GM12878 (cell line): ENCODE measurements at regions of chr5 and their contacts with region 1.

Region 1: DNA sequence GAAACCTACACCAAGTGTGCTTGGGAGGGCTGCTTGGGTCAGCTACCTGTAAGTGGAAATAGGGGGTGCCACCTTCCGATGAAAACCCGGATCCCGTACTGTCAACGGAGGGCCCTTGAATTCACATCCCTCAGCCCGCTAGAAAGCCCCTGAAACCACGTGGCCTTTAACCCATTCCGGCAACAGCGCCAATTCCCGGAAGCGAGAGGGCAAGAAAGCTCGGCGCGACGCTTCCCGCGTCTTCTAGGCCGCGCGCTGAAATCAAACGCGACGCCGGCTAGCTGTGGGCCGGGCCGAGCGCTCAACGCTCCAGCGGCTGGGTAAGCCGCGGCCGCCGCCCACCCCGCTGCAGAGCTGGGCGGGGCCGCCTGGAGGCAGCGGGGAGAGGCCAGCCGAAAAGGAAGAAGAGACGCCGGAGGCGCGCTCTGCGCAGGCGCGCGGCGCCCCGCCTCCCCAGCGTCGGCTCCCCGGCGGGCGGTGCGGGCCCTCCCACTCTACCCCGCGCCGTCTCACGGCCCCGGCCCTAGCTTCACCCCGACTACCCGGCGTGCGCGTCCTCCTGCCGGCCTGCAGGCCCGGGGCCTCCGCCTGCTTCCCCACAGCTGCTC is at the start of gene KIF2A:
- DNase-seq: peak; percentile 78
- ATAC-seq: peak; percentile 92
- H3K4me3 ChIP-seq: peak within 1 kb of the TSS; percentile 93
- H3K27ac ChIP-seq: peak within 1 kb of the TSS; percentile 67
- H3K4me1 ChIP-seq: peaks cover 9% of the 10 kb centered on the region
- H3K27me3 ChIP-seq: no peaks in the 10 kb centered on the region
- CTCF ChIP-seq: 0 out of 6 replicates have a peak, but pooled peaks of 1 of the 3 experiments have one; percentile 10
- EP300 ChIP-seq: no peak
- POLR2A ChIP-seq: peak; percentile 91
- RAD21 ChIP-seq: no peak
- polyA plus RNA-seq, gene KIF2A: 35.9 to 36.9 TPM

Region 2: DNA sequence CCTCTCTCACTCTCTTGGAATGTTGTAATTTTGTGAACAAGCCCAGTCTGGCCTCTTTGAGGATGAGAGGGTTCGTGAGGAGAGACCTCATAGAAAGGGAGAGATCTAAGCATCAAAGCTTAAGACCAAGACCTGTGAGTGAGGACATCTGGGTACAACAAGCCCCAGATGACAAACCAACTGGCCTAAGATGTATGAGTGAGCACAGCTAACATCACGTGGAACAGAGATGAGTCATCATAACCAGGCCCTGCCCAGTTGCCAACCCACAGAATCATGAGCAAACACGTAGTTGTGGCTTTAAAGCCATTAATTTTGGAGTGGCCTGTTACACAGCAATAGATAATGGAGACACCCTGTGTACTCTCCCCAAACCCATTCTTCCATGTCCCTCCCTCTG is 438.9 kb before region 1 on chr5:
- CTCF ChIA-PET with region 1: no interaction called
- POLR2A ChIA-PET with region 1: no interaction called
- RAD21 ChIA-PET with region 1: no interaction called
- SMC1A ChIA-PET with region 1: no interaction called
- in situ Hi-C with region 1: no loop called
- intact Hi-C with region 1: no loop called
- DNase-seq: peak; percentile 32
- ATAC-seq: peak; percentile 93
- H3K4me3 ChIP-seq: no peak overlapping the region
- H3K27ac ChIP-seq: no peak overlapping the region
- H3K4me1 ChIP-seq: no peaks in the 10 kb centered on the region
- H3K27me3 ChIP-seq: no peaks in the 10 kb centered on the region
- CTCF ChIP-seq: no peak
- EP300 ChIP-seq: no peak
- POLR2A ChIP-seq: no peak
- RAD21 ChIP-seq: no peak

Region 3: GRCh38 chr5:62268234-62268633 is 37.6 kb before region 1 on chr5:
- CTCF ChIA-PET with region 1: interaction called, 4 read pairs
- POLR2A ChIA-PET with region 1: interaction called, 4 read pairs
- RAD21 ChIA-PET with region 1: interaction called, 5 read pairs
- SMC1A ChIA-PET with region 1: interaction called, 5 read pairs
- in situ Hi-C with region 1: no loop called
- intact Hi-C with region 1: loop called (anchors 5 kb)
- DNase-seq: peak; percentile 26
- ATAC-seq: peak; percentile 69
- H3K4me3 ChIP-seq: no peak overlapping the region
- H3K27ac ChIP-seq: no peak overlapping the region
- H3K4me1 ChIP-seq: no peaks in the 10 kb centered on the region
- H3K27me3 ChIP-seq: no peaks in the 10 kb centered on the region
- CTCF ChIP-seq: no peak
- EP300 ChIP-seq: no peak
- POLR2A ChIP-seq: no peak
- RAD21 ChIP-seq: no peak

Region 4: GRCh38 chr5:62326302-62326701 is 20.5 kb after region 1 on chr5:
- CTCF ChIA-PET with region 1: interaction called, 10 read pairs
- POLR2A ChIA-PET with region 1: interaction called, 4 read pairs
- RAD21 ChIA-PET with region 1: interaction called, 10 read pairs
- SMC1A ChIA-PET with region 1: interaction called, 16 read pairs
- in situ Hi-C with region 1: no loop called
- intact Hi-C with region 1: no loop called
- DNase-seq: no peak
- ATAC-seq: peak; percentile 82
- H3K4me3 ChIP-seq: no peak overlapping the region
- H3K27ac ChIP-seq: peak overlapping the region; percentile 37; the same call in 1 of the 2 replicates
- H3K4me1 ChIP-seq: peaks cover 19% of the 10 kb centered on the region
- H3K27me3 ChIP-seq: no peaks in the 10 kb centered on the region
- CTCF ChIP-seq: no peak
- EP300 ChIP-seq: no peak
- POLR2A ChIP-seq: no peak
- RAD21 ChIP-seq: no peak

Region 5: GRCh38 chr5:62354028-62354874 is 48.4 kb after region 1 on chr5:
- CTCF ChIA-PET with region 1: interaction called, 7 read pairs
- POLR2A ChIA-PET with region 1: no interaction called
- RAD21 ChIA-PET with region 1: interaction called, 9 read pairs
- SMC1A ChIA-PET with region 1: interaction called, 10 read pairs
- in situ Hi-C with region 1: no loop called
- intact Hi-C with region 1: loop called (anchors 5 kb)
- DNase-seq: peak; percentile 35
- ATAC-seq: peak; percentile 92
- H3K4me3 ChIP-seq: no peak overlapping the region
- H3K27ac ChIP-seq: no peak overlapping the region
- H3K4me1 ChIP-seq: no peaks in the 10 kb centered on the region
- H3K27me3 ChIP-seq: no peaks in the 10 kb centered on the region
- CTCF ChIP-seq: peak; percentile 39 to 69 (median 48); a peak in 4 of 6 replicates
- EP300 ChIP-seq: no peak
- POLR2A ChIP-seq: no peak
- RAD21 ChIP-seq: peak; percentile 68

Region 6: DNA sequence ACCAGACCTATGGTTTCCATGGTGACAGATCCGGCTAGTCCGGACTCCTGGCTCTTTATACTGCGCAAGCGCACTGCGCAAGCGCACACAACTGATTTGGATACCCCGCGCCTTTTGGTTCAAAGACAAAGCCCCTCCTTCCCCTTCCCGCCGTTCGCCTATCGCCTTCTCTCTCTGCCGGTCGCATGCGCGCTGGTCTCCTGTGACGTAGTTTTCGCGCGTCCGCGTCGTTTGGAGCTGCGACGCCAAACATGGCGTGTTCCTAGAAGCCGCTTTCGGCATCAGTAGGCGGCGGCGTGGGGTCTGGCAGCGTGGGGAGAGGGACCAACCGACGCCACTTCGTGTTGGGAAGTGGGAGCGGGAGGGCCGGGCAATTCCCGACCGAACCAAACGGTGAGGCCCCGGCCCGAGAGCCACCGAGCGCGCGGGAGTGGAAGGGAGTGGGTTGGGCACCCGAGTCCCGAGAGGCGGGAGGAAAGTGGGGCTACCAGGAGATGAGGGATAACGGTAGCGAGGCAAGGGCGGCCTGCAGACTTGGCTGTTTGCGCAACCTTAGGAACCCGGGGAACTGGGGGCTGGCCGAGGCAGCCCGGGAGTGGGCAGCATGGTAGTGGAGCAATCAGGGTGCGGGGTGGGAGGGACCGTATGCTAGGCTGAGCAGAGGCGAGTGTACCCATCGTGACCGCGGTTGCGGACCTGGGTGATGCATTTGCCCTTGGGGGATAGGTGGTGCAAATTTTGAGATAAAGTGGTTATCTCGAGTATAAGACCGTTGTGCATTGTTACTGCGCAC is 106.9 kb after region 1 on chr5 and contains the start of gene IPO11:
- CTCF ChIA-PET with region 1: interaction called, 3 read pairs
- POLR2A ChIA-PET with region 1: interaction called, 5 read pairs
- RAD21 ChIA-PET with region 1: no interaction called
- SMC1A ChIA-PET with region 1: no interaction called
- in situ Hi-C with region 1: no loop called
- intact Hi-C with region 1: loop called (anchors 1 kb)
- DNase-seq: peak; percentile 98
- ATAC-seq: peak; percentile 98
- H3K4me3 ChIP-seq: peak within 1 kb of the TSS; percentile 80
- H3K27ac ChIP-seq: peak within 1 kb of the TSS; percentile 56
- H3K4me1 ChIP-seq: peaks cover 4% of the 10 kb centered on the region; the same call in 1 of the 2 replicates
- H3K27me3 ChIP-seq: no peaks in the 10 kb centered on the region
- CTCF ChIP-seq: no peak
- EP300 ChIP-seq: no peak
- POLR2A ChIP-seq: peak; percentile 98
- RAD21 ChIP-seq: no peak
- polyA plus RNA-seq, gene IPO11: 17.4 to 20.9 TPM